Activated CD8-positive, alpha-beta memory T cell treated with anti-CD3 and anti-CD28 coated beads, Interleukin-2, amount 10 ng/mL, durations not matched to agents 7 days and 5 days (primary cell): ENCODE measurements at regions of chr10 and their contacts with region 1.

Region 1: GRCh38 chr10:119663866-119664616 is 12.9 kb downstream of the BAG3 start:
- DNase-seq: peak; percentile 76
- ATAC-seq: peak; percentile 87
- H3K4me3 Mint-ChIP-seq: peak overlapping the region; percentile 53
- H3K27ac Mint-ChIP-seq: peak overlapping the region; percentile 91
- H3K4me1 Mint-ChIP-seq: peaks cover 32% of the 10 kb centered on the region
- H3K27me3 Mint-ChIP-seq: no peaks in the 10 kb centered on the region

Region 2: DNA sequence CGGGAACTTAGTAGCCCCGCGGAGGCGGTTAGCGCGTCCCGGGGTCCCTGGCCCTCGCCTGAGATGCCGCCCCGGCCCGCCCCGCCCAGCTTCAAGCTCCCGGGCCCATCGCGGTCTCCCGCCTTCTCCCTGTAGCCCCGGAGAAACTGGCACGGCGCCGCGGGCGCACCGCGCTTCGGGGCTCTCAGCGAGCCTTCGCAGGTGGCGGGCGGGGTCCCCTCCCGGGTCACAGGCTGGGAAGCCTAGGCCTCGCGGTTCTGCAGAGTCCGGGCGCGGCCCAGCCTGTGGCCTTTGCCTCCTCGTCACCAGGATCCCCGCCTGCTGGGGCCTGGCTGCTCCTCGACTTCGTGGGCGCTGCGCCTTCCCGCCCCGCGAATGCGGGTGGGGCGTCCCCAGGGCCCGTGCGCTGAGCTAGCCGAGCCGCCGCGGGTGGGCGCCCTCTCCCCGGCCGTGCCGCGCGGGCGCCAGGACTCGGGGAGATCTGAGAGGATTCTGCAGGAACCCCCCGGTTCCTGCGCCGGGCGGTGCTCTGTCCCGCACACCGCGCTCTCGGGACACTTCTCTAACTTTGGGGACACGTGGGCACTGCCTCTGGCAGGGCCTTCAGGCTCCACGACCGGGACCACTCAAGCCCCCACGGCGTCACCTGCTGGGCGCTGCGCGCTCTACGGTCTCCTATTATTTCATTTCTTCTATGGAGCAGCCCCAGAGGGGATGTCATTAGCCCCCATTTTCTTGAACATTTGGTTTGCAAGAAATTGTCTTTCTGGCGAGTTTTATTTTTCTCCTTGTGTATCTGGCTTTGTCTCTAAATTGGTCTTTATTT is 120.8 kb before region 1 on chr10:
- CTCF ChIA-PET with region 1: no interaction called
- DNase-seq: peak; percentile 83
- ATAC-seq: peak; percentile 28
- H3K4me3 Mint-ChIP-seq: peak overlapping the region; percentile 75
- H3K27ac Mint-ChIP-seq: peak overlapping the region; percentile 83
- H3K4me1 Mint-ChIP-seq: peaks cover 45% of the 10 kb centered on the region
- H3K27me3 Mint-ChIP-seq: peaks cover 18% of the 10 kb centered on the region

Region 3: DNA sequence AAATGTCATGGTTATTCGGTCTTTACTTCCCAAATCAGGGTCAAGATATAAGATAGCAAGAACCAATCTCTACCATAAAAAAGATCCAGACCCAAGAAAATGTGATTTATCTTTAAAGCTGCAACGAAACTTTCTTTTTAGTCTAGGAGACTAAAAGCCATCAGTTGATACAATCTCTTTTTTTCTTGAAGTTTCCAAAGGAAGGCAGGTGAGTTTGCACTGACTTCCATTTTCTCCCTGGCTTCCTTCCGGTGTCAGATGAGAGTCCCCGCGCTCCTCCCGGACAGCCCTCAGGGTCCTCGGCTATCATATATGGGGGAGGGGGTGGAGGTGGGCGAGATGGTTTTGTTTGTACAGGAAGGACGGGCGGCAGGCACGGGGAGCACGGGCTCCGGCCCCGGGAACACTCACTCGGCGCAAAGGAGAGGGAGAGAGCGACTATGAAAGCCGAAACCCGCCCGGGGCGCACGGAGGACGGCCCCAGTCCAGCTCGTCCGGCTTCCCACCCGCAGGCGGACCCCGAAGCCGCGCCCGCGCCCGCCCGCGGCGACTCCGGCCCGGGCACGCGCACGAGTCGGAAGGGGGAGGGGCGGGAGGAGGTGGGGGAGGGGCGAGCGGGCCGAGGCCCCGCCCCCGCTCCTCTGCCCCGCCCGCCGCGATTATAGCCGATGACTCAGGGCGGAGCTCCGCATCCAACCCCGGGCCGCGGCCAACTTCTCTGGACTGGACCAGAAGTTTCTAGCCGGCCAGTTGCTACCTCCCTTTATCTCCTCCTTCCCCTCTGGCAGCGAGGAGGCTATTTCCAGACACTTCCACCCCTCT is 13.1 kb before region 1 on chr10 and contains the start of gene BAG3:
- CTCF ChIA-PET with region 1: interaction called, 15 read pairs
- DNase-seq: peak; percentile 86
- ATAC-seq: peak; percentile 83
- H3K4me3 Mint-ChIP-seq: peak within 1 kb of the TSS; percentile 94
- H3K27ac Mint-ChIP-seq: peak within 1 kb of the TSS; percentile 95
- H3K4me1 Mint-ChIP-seq: peaks cover 43% of the 10 kb centered on the region
- H3K27me3 Mint-ChIP-seq: peaks cover 6% of the 10 kb centered on the region
- total RNA-seq, gene BAG3: 12.7 to 13.0 TPM

Region 4: GRCh38 chr10:120530699-120531098 is 866.7 kb after region 1 on chr10:
- CTCF ChIA-PET with region 1: no interaction called
- DNase-seq: no peak
- ATAC-seq: no peak
- H3K4me3 Mint-ChIP-seq: no peak overlapping the region
- H3K27ac Mint-ChIP-seq: no peak overlapping the region
- H3K4me1 Mint-ChIP-seq: no peaks in the 10 kb centered on the region
- H3K27me3 Mint-ChIP-seq: no peaks in the 10 kb centered on the region